Heart left ventricle (tissue), 16 donors: ENCODE measurements at regions of chr4 and their contacts with region 1.

Region 1: DNA sequence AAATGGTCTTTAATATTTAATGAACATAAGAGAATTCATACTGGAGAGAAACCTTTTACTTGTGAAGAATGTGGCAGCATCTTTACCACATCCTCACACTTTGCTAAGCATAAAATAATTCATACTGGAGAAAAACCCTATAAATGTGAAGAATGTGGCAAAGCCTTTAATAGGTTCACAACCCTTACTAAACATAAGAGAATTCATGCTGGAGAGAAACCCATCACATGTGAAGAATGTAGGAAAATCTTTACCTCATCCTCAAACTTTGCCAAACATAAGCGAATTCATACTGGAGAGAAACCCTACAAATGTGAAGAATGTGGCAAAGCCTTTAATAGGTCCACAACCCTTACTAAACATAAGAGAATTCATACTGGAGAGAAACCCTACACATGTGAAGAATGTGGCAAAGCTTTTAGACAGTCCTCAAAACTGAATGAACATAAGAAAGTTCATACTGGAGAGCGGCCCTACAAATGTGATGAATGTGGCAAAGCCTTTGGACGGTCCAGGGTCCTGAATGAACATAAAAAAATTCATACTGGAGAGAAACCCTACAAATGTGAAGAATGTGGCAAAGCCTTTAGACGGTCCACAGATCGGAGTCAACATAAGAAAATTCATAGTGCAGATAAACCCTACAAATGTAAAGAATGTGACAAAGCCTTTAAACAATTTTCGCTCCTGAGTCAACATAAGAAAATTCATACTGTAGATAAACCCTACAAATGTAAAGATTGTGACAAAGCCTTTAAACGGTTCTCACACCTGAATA is 35.6 kb downstream of the ZNF141 start:
- DNase-seq: no peak
- ATAC-seq: no peak
- H3K4me3 ChIP-seq: no peak overlapping the region
- H3K27ac ChIP-seq: no peak overlapping the region
- H3K4me1 ChIP-seq: no peaks in the 10 kb centered on the region
- H3K27me3 ChIP-seq: no peaks in the 10 kb centered on the region
- CTCF ChIP-seq: no peak
- POLR2A ChIP-seq: no peak

Region 2: DNA sequence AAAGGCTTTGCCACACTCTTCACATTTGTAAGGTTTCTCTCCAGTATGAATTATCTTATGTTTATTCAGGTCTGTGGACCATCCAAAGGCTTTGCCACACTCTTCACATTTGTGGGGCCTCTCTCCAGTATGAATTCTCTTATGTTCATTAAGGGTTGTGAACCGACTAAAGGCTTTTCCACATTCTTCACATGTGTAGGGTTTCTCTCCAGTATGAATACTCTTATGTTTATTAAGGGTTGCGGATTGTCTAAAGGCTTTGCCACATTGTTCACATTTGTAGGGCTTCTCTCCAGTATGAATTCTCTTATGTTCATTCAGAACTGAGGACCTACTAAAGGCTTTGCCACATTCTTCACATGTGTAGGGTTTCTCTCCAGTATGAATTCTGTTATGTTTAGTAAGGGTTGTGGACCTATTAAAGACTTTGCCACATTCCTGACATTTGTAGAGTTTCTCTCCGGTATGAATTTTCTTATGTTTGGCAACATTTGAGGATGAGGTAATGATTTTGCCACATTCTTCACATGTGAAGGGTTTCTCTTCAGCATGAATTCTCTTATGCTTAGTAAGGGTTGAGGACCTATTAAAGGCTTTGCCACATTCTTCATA is 101.7 kb before region 1 on chr4:
- intact Hi-C with region 1: loop called in 1 of 10 experiments (anchors 10 kb)
- DNase-seq: no peak
- ATAC-seq: no peak
- H3K4me3 ChIP-seq: no peak overlapping the region
- H3K27ac ChIP-seq: no peak overlapping the region
- H3K4me1 ChIP-seq: no peaks in the 10 kb centered on the region
- H3K27me3 ChIP-seq: no peaks in the 10 kb centered on the region
- CTCF ChIP-seq: no peak
- POLR2A ChIP-seq: no peak

Region 3: DNA sequence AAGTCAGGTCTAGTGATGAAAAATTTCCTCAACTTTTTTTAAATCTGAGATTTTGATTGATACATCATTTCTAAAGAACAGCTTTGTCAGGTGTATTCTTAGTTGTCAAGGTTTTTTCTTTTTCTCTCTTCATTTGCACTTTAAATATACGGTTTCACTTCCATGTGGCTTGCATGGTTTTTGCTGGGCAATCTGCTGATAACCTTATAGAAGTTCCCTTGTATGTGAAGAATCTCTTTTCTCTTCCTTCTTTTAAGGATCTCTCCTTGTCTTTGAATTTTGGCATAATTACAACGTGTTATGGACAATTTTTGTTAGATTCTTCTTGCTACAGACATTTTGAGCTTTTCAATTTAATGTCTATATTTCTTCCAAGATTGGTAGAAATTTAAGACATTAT is 49.3 kb after region 1 on chr4:
- intact Hi-C with region 1: loop called in 2 of 10 experiments (anchors 5 to 10 kb)
- DNase-seq: no peak
- ATAC-seq: no peak
- H3K4me3 ChIP-seq: no peak overlapping the region
- H3K27ac ChIP-seq: no peak overlapping the region
- H3K4me1 ChIP-seq: no peaks in the 10 kb centered on the region
- H3K27me3 ChIP-seq: no peaks in the 10 kb centered on the region
- CTCF ChIP-seq: no peak
- POLR2A ChIP-seq: no peak

Region 4: GRCh38 chr4:445410-445809 is 72.2 kb after region 1 on chr4:
- intact Hi-C with region 1: loop called in 1 of 10 experiments (anchors 5 kb)
- DNase-seq: no peak
- ATAC-seq: no peak
- H3K4me3 ChIP-seq: no peak overlapping the region
- H3K27ac ChIP-seq: no peak overlapping the region
- H3K4me1 ChIP-seq: no peaks in the 10 kb centered on the region
- H3K27me3 ChIP-seq: no peaks in the 10 kb centered on the region
- CTCF ChIP-seq: no peak
- POLR2A ChIP-seq: no peak